IMR-90 (cell line): ENCODE measurements at regions of chr13 and their contacts with region 1.

Region 1: DNA sequence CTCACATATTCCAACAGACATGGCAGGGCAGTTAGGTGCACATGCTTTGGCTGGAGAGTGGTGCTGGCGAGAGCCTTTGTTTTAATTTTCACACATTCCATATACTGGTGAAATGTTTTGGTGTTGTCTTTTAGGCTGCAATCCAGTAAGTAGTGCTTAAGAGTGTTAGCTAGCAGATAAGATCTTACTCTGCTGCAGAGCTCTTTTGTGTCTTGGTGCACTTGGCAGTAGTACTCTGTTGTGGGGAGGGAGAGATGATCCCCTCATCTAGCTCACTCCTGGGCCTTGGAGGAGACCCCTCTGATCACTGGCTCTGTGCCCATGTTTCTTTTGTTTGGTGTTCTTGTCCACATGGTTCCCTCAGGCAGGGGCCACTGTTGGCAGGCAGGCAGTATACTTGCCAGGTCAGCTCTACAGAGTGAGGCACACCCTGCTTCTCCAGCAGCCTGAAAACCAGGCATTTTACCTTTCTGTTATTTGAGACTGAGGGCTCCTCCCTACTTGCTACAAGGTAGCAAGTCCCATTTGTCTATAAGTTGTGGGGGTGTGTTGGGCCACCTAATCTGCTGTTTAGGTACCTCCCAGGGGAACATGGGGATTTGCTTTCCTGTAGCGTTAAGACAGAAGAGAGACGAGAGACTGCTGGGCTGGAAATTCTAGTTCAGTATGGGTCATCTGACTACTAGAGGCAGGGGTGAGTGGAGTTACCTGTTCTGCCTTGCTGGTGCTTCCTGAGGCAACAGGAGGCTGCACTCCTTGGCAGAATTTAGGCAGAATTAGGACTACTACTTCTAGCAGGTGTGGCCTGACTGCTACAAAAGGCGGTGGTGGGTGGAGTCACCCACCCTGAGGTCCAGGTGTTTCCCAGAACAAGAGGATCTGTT is 843.2 kb upstream of the ATXN8OS start:
- DNase-seq: no peak
- ATAC-seq: no peak
- H3K4me3 ChIP-seq: no peak overlapping the region
- H3K27ac ChIP-seq: no peak overlapping the region
- H3K4me1 ChIP-seq: no peaks in the 10 kb centered on the region
- H3K27me3 ChIP-seq: no peaks in the 10 kb centered on the region
- CTCF ChIP-seq: no peak
- POLR2A ChIP-seq: no peak
- RAD21 ChIP-seq: no peak

Region 2: DNA sequence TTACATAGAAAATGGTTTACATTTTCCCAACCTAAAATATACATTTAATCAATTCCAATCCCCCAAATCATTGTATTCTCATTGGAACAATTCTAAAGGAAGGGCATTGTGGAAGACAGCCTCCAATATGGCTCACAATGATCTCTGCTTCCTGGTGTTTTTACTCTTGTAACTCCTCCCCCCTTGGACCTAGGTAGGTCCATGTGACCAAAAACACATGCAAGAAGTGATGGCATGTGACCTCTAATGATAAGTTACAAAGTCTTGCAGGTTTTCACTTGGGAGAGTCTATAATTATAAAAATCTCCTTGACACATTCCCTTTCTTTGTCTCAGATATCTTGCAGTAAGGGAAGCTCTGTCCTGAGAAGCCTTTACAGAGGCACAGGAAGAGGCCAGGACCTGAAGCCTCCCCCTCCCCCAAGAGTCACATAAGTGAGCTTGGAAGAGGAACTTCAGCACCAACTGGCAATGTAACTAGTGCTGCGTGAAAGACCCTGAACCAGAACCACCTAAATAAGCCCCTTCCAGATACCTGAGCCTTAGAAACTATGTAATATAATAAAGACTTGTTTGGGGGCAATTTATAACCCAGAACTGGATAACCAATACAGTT is 27.0 kb after region 1 on chr13:
- CTCF ChIA-PET with region 1: no interaction called
- POLR2A ChIA-PET with region 1: no interaction called
- dilution Hi-C with region 1: no loop called
- in situ Hi-C with region 1: no loop called
- intact Hi-C with region 1: no loop called
- DNase-seq: no peak
- ATAC-seq: no peak
- H3K4me3 ChIP-seq: no peak overlapping the region
- H3K27ac ChIP-seq: no peak overlapping the region
- H3K4me1 ChIP-seq: no peaks in the 10 kb centered on the region
- H3K27me3 ChIP-seq: no peaks in the 10 kb centered on the region
- CTCF ChIP-seq: no peak
- POLR2A ChIP-seq: no peak
- RAD21 ChIP-seq: no peak

Region 3: DNA sequence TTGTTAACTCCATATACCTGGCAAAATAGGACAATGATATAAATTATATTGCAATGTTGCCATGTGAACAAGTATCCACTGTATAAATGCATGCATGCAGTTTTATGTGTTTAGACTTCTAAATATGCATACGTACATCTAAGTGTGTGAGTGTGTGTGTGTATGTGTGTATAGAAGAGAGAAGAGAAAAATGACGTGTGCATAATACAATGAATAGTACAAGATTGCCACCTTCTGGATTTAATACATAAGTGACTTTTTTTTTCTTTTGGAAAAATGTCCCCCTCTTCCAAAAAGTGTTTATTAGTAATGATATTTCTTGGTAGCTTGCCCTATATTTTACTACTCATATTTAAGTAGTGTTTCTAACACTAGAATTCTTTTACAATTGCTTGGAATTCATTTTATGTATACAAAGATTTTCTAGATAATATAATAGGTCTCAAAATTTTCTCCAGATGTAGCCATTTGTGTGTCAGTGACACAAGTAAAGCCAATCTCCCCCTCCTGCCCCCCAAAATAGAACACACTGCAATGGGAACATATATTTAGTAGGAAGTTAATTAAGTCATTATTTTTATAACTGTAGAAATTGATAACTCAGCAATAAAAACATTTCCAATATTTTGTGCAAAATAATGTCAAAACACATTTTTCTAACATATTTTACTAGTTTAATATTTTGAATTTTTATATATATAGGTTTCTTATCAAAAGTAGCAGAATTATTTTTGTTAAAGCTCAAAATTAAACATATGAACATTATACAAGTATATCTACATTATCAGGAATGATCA is 59.9 kb after region 1 on chr13:
- CTCF ChIA-PET with region 1: no interaction called
- POLR2A ChIA-PET with region 1: no interaction called
- dilution Hi-C with region 1: no loop called
- in situ Hi-C with region 1: no loop called
- intact Hi-C with region 1: no loop called
- DNase-seq: no peak
- ATAC-seq: no peak
- H3K4me3 ChIP-seq: no peak overlapping the region
- H3K27ac ChIP-seq: no peak overlapping the region
- H3K4me1 ChIP-seq: no peaks in the 10 kb centered on the region
- H3K27me3 ChIP-seq: no peaks in the 10 kb centered on the region
- CTCF ChIP-seq: no peak
- POLR2A ChIP-seq: no peak
- RAD21 ChIP-seq: no peak

Region 4: GRCh38 chr13:70408865-70409264 is 1144.5 kb after region 1 on chr13:
- CTCF ChIA-PET with region 1: no interaction called
- POLR2A ChIA-PET with region 1: no interaction called
- dilution Hi-C with region 1: no loop called
- in situ Hi-C with region 1: no loop called
- intact Hi-C with region 1: loop called (anchors 5 kb)
- DNase-seq: no peak
- ATAC-seq: no peak
- H3K4me3 ChIP-seq: no peak overlapping the region
- H3K27ac ChIP-seq: no peak overlapping the region
- H3K4me1 ChIP-seq: no peaks in the 10 kb centered on the region
- H3K27me3 ChIP-seq: no peaks in the 10 kb centered on the region
- CTCF ChIP-seq: no peak
- POLR2A ChIP-seq: no peak
- RAD21 ChIP-seq: no peak